ENCODE measurements at regions of chr20 and their contacts with region 1.

Region 1: GRCh38 chr20:32277361-32278198 is at the start of gene KIF3B:
- DNase-seq: peak; percentile 87
- H3K4me3 Mint-ChIP-seq: peak within 1 kb of the TSS; percentile 91
- H3K27ac Mint-ChIP-seq: peak within 1 kb of the TSS; percentile 84
- H3K4me1 Mint-ChIP-seq: peaks cover 49% of the 10 kb centered on the region
- H3K27me3 Mint-ChIP-seq: no peaks in the 10 kb centered on the region
- total RNA-seq, gene KIF3B: 38.1 and 39.1 TPM in 2 replicates

Region 2: DNA sequence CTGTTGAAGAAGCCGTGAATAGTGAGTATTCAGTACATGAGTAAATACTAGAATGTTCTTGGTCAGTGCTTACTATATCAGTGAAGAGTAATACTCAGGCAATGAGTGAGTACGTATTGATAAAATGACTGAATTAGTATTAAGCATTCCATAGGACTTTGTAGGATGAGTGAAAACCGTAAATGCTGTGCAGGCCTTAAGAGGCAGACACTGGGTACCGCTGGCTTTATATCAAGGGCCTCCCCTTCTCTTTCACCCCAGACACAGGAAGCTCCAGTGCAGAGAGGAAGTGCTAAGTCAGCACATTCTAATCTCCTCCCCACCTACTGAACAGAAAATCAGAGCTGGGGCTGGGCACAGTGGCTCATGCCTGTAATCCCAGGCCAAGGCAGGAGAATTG is 45.7 kb before region 1 on chr20:
- intact Hi-C with region 1: loop called (anchors 1 kb)
- DNase-seq: peak; percentile 31
- H3K4me3 Mint-ChIP-seq: peak overlapping the region; percentile 69
- H3K27ac Mint-ChIP-seq: peak overlapping the region; percentile 95
- H3K4me1 Mint-ChIP-seq: peaks cover 40% of the 10 kb centered on the region
- H3K27me3 Mint-ChIP-seq: no peaks in the 10 kb centered on the region

Region 3: DNA sequence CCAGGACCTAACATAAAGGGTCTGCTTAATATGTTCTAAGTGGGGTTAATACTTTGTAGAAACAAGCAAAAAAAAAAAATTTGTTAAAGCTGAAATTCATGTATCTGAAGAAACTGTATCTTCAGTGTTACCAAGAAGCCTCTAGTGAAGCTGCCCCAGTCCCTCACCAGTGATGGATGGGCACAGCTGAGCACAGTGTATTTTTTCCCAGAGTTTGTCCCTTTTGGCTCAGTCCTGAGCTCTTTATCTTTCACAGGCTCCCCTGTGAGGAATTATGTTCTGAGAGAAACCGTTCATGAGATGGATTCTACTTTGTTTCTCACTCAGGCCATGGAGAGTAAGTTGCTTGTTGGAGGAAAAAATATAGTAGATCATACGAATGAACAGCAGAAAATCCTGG is 38.3 kb after region 1 on chr20:
- intact Hi-C with region 1: no loop called
- DNase-seq: no peak
- H3K4me3 Mint-ChIP-seq: no peak overlapping the region
- H3K27ac Mint-ChIP-seq: no peak overlapping the region
- H3K4me1 Mint-ChIP-seq: peaks cover 10% of the 10 kb centered on the region
- H3K27me3 Mint-ChIP-seq: no peaks in the 10 kb centered on the region